Gastrocnemius medialis (tissue), 4 donors: ENCODE measurements at regions of chr3 and their contacts with region 1.

Region 1: GRCh38 chr3:69080233-69080920 is at the start of gene UBA3:
- DNase-seq: peak; percentile 86 to 90
- ATAC-seq: peak; percentile 45 to 52
- H3K4me3 ChIP-seq: peak within 1 kb of the TSS; percentile 78 to 89 (median 82)
- H3K27ac ChIP-seq: peak within 1 kb of the TSS; percentile 95 to 99 (median 97)
- H3K4me1 ChIP-seq: peaks cover 58 to 61% of the 10 kb centered on the region in 2 donors
- H3K27me3 ChIP-seq: no peaks in the 10 kb centered on the region
- CTCF ChIP-seq: no peak
- POLR2A ChIP-seq: peak in 1 of 2 donors; percentile 25
- total RNA-seq, gene UBA3: 29.3 to 42.2 (median 36.0) TPM

Region 2: GRCh38 chr3:69051756-69052471 is 28.5 kb before region 1 on chr3 and contains the start of gene TMF1:
- in situ Hi-C with region 1: no loop called
- intact Hi-C with region 1: loop called (anchors 1 kb)
- DNase-seq: peak; percentile 97
- ATAC-seq: peak; percentile 99
- H3K4me3 ChIP-seq: peak within 1 kb of the TSS; percentile 81 to 97 (median 85)
- H3K27ac ChIP-seq: peak within 1 kb of the TSS; percentile 90 to 96 (median 94)
- H3K4me1 ChIP-seq: peaks cover 10 to 16% of the 10 kb centered on the region in 2 donors
- H3K27me3 ChIP-seq: no peaks in the 10 kb centered on the region
- CTCF ChIP-seq: no peak
- POLR2A ChIP-seq: peak; percentile 71 to 76
- total RNA-seq, gene TMF1: 27.0 to 49.6 (median 33.5) TPM